Gastrocnemius medialis (tissue), 4 donors: ENCODE measurements at regions of chr6 and their contacts with region 1.

Region 1: DNA sequence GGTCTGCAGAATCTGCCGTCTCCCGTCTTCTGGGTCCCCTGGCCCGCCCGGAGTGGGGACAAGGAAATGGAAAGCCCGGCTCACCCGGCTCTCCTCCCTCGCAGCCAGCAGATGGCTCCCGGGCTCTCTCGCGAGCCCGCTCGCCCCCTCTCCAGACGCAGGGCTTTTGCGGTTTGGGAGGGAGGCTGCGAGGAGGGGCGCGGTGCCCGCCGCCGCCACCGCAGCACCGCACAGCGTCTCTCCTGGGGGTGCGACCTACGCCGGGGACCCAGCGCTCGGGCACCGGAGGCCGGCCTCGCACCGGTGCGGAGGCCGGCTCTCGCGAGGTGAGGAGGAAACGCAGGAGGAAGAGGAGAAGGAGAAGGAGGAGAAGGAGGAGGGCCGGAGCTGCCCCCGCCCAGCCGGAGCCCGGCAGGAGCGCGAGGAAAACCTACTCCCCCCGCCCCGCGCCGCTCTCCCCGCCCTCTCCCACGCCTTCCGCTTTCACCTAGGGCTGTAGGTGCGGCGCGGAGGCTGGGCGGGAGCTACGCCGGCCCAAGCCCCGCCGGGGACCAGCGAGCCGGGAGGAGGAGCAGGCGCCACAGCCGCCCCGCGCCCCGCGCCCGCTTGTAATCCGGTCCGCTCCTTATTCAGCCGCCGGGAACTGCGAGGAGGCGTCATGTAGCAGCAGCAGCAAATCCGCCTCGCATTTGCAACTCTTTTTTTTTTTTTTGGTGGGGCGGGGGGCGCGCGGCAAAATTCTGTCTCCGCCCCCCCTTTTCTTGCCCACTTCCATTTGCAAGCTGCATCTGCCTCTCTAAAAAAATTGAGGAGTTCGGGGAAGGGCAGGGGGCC is at the start of gene CARMIL1:
- DNase-seq: peak; percentile 36 to 44
- ATAC-seq: peak; percentile 67 to 84
- H3K4me3 ChIP-seq: peak within 1 kb of the TSS; percentile 63 to 89 (median 68)
- H3K27ac ChIP-seq: peak within 1 kb of the TSS in 3 of 4 donors; percentile 13 to 52 (median 16)
- H3K4me1 ChIP-seq: peaks cover 9 to 16% of the 10 kb centered on the region in 2 donors
- H3K27me3 ChIP-seq: peaks cover 3 to 37% (median 18%) of the 10 kb centered on the region in 3 donors
- CTCF ChIP-seq: peak; percentile 29 to 50 (median 38)
- POLR2A ChIP-seq: no peak
- total RNA-seq, gene CARMIL1: 0.87 to 2.1 (median 1.7) TPM

Region 2: DNA sequence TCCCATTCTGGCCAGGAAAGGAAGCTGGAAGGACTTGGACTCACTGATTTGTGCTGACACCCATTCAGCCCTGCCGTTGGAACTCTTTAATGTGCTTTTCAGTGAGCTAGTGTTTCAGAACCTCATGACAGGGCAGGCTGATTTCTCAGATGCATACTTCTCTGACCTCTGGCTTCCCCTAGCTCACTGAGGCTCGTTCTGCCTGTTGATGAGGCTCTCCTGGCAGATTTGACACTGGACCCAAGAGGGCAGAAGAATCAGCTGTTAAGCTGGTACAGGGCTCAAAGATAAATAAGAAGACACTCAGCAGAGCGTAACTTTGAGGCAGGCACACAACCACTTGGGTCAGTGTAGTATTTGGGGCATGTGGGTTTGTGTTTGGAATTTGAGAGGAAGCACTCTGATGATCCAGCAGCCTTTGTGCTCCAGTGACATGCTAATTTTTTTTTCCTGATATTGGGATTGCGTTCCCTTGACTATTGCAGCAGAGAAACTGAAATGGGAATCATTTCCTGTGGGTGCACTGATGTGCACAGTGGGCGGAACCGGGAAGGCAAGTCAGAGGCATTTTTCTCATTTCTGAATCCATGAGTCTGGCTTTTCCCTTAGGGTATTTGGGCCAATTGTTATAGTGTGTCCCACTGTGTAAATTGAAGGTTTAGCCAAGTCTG is 80.2 kb after region 1 on chr6:
- in situ Hi-C with region 1: no loop called
- intact Hi-C with region 1: no loop called
- DNase-seq: peak in 1 of 2 donors; percentile 25
- ATAC-seq: peak; percentile 72 to 74
- H3K4me3 ChIP-seq: no peak overlapping the region
- H3K27ac ChIP-seq: peak overlapping the region in 3 of 4 donors; percentile 15 to 50 (median 44)
- H3K4me1 ChIP-seq: peaks cover 0 to 10% of the 10 kb centered on the region in 2 donors
- H3K27me3 ChIP-seq: no peaks in the 10 kb centered on the region
- CTCF ChIP-seq: no peak
- POLR2A ChIP-seq: no peak

Region 3: GRCh38 chr6:25490018-25490801 is 211.1 kb after region 1 on chr6:
- in situ Hi-C with region 1: loop called (anchors 5 to 25 kb)
- intact Hi-C with region 1: loop called (anchors 5 kb)
- DNase-seq: peak; percentile 22 to 37
- ATAC-seq: peak; percentile 33 to 58
- H3K4me3 ChIP-seq: no peak overlapping the region
- H3K27ac ChIP-seq: no peak overlapping the region
- H3K4me1 ChIP-seq: no peaks in the 10 kb centered on the region
- H3K27me3 ChIP-seq: no peaks in the 10 kb centered on the region
- CTCF ChIP-seq: peak; percentile 18 to 44 (median 37)
- POLR2A ChIP-seq: no peak